ENCODE measurements at regions of chr7 and their contacts with region 1.

Region 1: GRCh38 chr7:7761340-7761980 is 43.1 kb upstream of the RPA3 start:
- DNase-seq: peak in 2 of 9 experiments; percentile 61 to 68
- ATAC-seq: peak; percentile 24
- H3K4me3 ChIP-seq: peak overlapping the region; percentile 49 to 52
- H3K4me3 Mint-ChIP-seq: peak overlapping the region; percentile 93
- H3K27ac ChIP-seq: peak overlapping the region; percentile 52 to 80
- H3K27ac Mint-ChIP-seq: peak overlapping the region; percentile 98
- H3K4me1 ChIP-seq: peaks cover 29% of the 10 kb centered on the region
- H3K4me1 Mint-ChIP-seq: peaks cover 46% of the 10 kb centered on the region
- H3K27me3 ChIP-seq: no peaks in the 10 kb centered on the region
- H3K27me3 Mint-ChIP-seq: no peaks in the 10 kb centered on the region
- CTCF ChIP-seq: peak; percentile 46

Region 2: GRCh38 chr7:7424151-7424873 is 337.1 kb before region 1 on chr7:
- CTCF ChIA-PET with region 1: no interaction called
- POLR2A ChIA-PET with region 1: no interaction called
- intact Hi-C with region 1: loop called in 1 of 2 experiments (anchors 10 kb)
- DNase-seq: peak; percentile 8 to 67 (median 36)
- ATAC-seq: no peak
- H3K4me3 ChIP-seq: peak overlapping the region; percentile 53 to 71
- H3K4me3 Mint-ChIP-seq: peak overlapping the region; percentile 85
- H3K27ac ChIP-seq: no peak overlapping the region
- H3K27ac Mint-ChIP-seq: peak overlapping the region; percentile 71
- H3K4me1 ChIP-seq: no peaks in the 10 kb centered on the region
- H3K4me1 Mint-ChIP-seq: peaks cover 8% of the 10 kb centered on the region
- H3K27me3 ChIP-seq: no peaks in the 10 kb centered on the region
- H3K27me3 Mint-ChIP-seq: no peaks in the 10 kb centered on the region
- CTCF ChIP-seq: peak; percentile 40

Region 3: DNA sequence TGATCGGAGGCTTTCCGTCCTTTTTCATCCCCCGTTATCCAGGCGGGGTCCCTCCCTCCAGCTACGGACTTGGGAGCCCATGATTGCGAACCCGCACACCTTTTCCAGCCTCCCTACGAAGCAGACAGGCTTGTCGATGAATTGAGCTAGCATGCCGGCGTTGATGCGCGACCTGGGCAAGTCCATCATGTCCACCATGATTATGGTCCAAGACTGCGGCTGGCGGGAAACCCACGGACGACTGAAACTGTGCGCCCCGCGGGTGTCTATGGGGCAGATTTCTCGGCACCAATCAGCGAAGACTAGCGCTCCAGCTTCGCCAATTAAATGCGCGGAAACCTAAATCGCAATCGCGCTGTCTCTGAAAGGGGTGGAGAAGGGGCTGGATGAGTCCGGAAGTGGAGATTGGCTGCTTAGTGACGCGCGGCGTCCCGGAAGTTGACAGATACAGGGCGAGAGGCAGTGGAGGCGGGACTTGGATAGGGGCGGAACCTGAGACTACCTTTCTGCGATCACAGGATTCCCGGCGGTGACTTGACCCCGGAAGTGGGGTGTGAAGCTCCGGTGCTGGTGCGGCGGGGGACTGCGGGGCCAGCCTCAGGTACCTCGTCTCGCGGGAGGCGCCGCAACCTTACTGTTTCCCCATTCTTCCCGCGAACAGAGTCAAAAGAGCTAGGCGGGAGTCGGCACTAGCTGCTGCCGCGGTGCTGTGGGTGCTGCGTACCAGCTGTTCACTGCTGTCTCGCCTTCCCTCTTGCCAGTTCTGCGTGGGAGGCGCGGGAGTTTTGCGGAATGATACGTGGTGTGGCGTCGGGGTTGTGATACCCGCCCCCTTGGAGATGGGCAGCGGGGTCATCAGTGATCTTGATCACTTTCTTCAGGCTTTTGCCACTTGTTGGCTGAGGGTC is 121.0 kb before region 1 on chr7 and contains the start of gene UMAD1:
- CTCF ChIA-PET with region 1: interaction called, 3 read pairs
- POLR2A ChIA-PET with region 1: interaction called, 5 read pairs
- intact Hi-C with region 1: loop called in 1 of 2 experiments (anchors 2 kb)
- DNase-seq: peak; percentile 96 to 100 (median 98)
- ATAC-seq: peak; percentile 87
- H3K4me3 ChIP-seq: peak within 1 kb of the TSS; percentile 84 to 94
- H3K4me3 Mint-ChIP-seq: peak within 1 kb of the TSS; percentile 97
- H3K27ac ChIP-seq: peak within 1 kb of the TSS; percentile 96 to 97
- H3K27ac Mint-ChIP-seq: peak within 1 kb of the TSS; percentile 96
- H3K4me1 ChIP-seq: peaks cover 22% of the 10 kb centered on the region
- H3K4me1 Mint-ChIP-seq: peaks cover 46% of the 10 kb centered on the region
- H3K27me3 ChIP-seq: no peaks in the 10 kb centered on the region
- H3K27me3 Mint-ChIP-seq: no peaks in the 10 kb centered on the region
- CTCF ChIP-seq: no peak
- total RNA-seq, gene UMAD1: 11.1 to 11.2 TPM

Region 4: GRCh38 chr7:8035647-8036518 is 274.4 kb after region 1 on chr7:
- CTCF ChIA-PET with region 1: interaction called, 3 read pairs
- POLR2A ChIA-PET with region 1: no interaction called
- intact Hi-C with region 1: loop called (anchors 5 to 10 kb)
- DNase-seq: peak in 4 of 9 experiments; percentile 5 to 71 (median 56)
- ATAC-seq: peak; percentile 92
- H3K4me3 ChIP-seq: no peak overlapping the region
- H3K4me3 Mint-ChIP-seq: no peak overlapping the region
- H3K27ac ChIP-seq: peak overlapping the region in 1 of 2 experiments; percentile 40
- H3K27ac Mint-ChIP-seq: peak overlapping the region; percentile 58
- H3K4me1 ChIP-seq: peaks cover 5% of the 10 kb centered on the region
- H3K4me1 Mint-ChIP-seq: peaks cover 26% of the 10 kb centered on the region
- H3K27me3 ChIP-seq: no peaks in the 10 kb centered on the region
- H3K27me3 Mint-ChIP-seq: no peaks in the 10 kb centered on the region
- CTCF ChIP-seq: peak; percentile 55

Region 5: DNA sequence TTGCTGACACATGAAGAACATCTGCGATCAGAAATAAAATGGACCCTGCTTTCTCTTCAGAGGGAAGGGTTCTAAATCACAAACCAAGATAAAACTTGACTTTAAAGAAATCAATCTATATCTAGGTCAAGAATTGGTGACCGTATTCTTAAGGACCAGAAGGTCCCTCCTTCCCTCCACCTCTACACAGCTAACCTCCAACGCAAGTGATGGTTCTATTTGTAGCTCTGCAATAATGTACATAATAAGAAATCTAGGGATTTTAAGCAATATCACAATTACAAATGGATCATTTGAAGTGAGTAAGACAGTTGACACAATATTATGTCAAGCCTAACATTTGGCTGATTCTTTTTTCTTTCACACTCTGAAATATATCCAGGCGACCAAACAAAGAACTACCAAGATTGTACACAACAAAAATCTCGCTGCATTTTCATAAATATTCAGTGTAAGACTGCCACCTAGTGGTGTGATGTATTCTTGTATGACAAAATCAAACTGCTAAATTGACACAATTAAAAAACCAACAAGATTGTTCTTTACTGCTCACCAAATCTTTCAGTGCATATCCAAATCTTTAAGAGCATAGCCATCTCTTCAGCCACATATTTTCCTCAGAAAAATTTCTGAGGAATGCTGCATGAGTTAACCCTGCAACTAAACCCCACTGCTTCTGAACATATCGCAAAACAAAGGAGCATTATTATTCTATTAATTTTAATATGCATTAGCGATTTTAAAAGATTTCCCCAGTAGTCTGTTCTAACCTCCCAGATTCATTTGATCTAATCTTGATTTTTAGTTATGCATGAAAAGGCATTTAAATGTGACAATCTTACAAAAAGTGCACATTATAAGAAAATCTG is 456.0 kb after region 1 on chr7:
- CTCF ChIA-PET with region 1: no interaction called
- POLR2A ChIA-PET with region 1: no interaction called
- intact Hi-C with region 1: loop called (anchors 5 kb)
- DNase-seq: peak in 3 of 9 experiments; percentile 55 to 81 (median 74)
- ATAC-seq: peak; percentile 58
- H3K4me3 ChIP-seq: no peak overlapping the region
- H3K4me3 Mint-ChIP-seq: no peak overlapping the region
- H3K27ac ChIP-seq: no peak overlapping the region
- H3K27ac Mint-ChIP-seq: no peak overlapping the region
- H3K4me1 ChIP-seq: no peaks in the 10 kb centered on the region
- H3K4me1 Mint-ChIP-seq: peaks cover 3% of the 10 kb centered on the region
- H3K27me3 ChIP-seq: no peaks in the 10 kb centered on the region
- H3K27me3 Mint-ChIP-seq: no peaks in the 10 kb centered on the region
- CTCF ChIP-seq: peak; percentile 79

Measured in CD8-positive, alpha-beta T cell (primary cell).